Naive thymus-derived CD4-positive, alpha-beta T cell (primary cell): ENCODE measurements at regions of chr10 and their contacts with region 1.

Region 1: DNA sequence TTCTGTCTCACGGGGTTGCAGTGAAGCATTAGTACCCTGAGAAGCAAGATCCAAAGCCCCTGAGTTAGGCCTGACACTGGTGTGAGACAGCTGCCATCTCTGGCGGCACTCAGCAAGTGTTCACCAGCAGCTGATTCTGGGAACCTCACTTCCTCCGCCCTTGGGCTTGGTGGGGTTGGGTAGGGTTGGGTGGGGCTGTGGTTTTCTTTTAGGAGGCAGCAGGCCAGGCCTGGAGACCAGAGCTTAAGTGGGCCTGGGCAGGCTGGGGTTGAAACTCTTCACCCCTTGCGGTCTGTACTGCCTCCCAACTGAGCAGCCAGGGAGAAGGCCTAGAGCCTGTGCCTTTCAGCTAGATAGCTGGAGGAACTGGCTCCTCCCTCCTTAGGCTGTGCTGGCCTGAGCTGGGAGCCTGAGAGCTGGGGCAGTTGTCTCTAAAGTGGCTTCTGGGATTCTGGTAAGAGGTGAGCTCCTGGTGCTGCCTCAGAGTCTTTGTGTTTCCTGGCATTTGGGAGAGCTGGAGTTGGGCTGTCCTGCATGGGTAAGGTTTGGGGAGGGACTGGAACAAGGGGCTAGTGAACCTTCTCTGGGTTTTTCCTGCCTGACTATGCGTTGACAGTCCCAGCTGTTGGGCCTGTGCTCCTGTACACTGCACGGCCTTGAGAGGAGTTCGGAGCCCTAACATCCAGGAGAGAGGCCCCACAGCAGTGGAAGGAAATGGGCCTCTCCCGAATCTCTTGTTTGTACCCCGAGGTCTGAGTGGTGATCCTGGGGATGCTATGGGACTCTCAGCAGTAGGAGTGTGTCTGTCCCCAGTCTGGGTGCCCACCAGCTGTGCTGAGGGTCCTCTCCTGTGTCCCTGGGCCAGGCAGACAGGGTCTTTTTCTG is 5.2 kb downstream of the TSPAN14 start:
- DNase-seq: peak in 7 of 9 donors; percentile 53 to 66 (median 55)
- ATAC-seq: peak; percentile 66
- H3K4me3 ChIP-seq: peak overlapping the region; percentile 87
- H3K4me3 Mint-ChIP-seq: peak overlapping the region; percentile 79 to 99 (median 98)
- H3K27ac ChIP-seq: peak overlapping the region; percentile 84
- H3K27ac Mint-ChIP-seq: peak overlapping the region; percentile 87 to 99 (median 98)
- H3K4me1 ChIP-seq: peaks cover 75 to 79% of the 10 kb centered on the region in 2 donors
- H3K4me1 Mint-ChIP-seq: peaks cover 77 to 85% (median 83%) of the 10 kb centered on the region in 7 donors
- H3K27me3 ChIP-seq: no peaks in the 10 kb centered on the region
- H3K27me3 Mint-ChIP-seq: no peaks in the 10 kb centered on the region

Region 2: GRCh38 chr10:80530251-80530650 is 71.0 kb after region 1 on chr10:
- CTCF ChIA-PET with region 1: interaction called, 3 read pairs
- POLR2A ChIA-PET with region 1: interaction called, 4 read pairs
- intact Hi-C with region 1: loop called in 1 of 2 experiments (anchors 2 kb)
- DNase-seq: peak in 6 of 9 donors; percentile 38 to 56 (median 46)
- ATAC-seq: peak; percentile 77
- H3K4me3 ChIP-seq: no peak overlapping the region
- H3K4me3 Mint-ChIP-seq: peak overlapping the region; percentile 56 to 85 (median 73)
- H3K27ac ChIP-seq: peak overlapping the region; percentile 60
- H3K27ac Mint-ChIP-seq: peak overlapping the region; percentile 88 to 97 (median 92)
- H3K4me1 ChIP-seq: peaks cover 39 to 74% of the 10 kb centered on the region in 2 donors
- H3K4me1 Mint-ChIP-seq: peaks cover 55 to 77% (median 73%) of the 10 kb centered on the region in 7 donors
- H3K27me3 ChIP-seq: no peaks in the 10 kb centered on the region
- H3K27me3 Mint-ChIP-seq: no peaks in the 10 kb centered on the region